HEK293T (cell line): ENCODE measurements at regions of chr10 and their contacts with region 1.

Region 1: GRCh38 chr10:95693668-95694534 is at the start of gene TCTN3:
- DNase-seq: peak; percentile 100

Region 2: GRCh38 chr10:95183271-95184230 is 510.4 kb before region 1 on chr10:
- CTCF ChIA-PET with region 1: no interaction called
- POLR2A ChIA-PET with region 1: no interaction called
- DNase-seq: peak; percentile 95

Region 3: DNA sequence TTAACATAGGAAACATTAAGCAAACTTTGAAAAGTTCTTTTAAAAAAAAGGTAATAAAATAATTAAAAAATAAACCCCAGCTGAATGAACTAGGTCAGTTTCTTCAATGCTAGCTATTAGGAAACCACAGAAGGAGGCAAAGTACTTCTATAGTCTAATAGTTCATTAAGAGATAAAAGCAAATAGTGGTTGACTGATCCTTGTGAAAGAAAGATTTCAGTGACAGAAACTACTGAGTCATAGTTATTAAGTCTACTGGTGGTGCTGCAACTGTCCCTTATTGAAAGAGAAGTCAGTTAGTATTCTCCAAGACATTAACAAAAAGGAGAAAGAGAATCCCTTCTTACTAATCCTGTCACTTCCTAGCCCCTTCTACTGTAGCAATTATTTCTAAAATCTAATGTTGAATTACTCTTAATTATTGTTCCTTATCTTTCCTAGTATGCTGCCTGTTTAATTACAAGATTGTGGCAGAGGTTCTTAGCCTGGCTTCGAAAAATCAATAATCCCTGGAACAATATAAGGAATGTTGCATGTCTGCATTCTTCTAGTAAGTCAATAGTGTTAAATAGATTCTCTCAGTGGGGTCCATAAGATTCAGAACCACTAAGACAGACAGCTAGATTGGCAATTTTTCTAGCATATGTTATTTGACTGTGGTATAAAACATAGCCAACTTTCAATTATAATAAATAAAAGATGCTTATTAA is 18.3 kb before region 1 on chr10:
- CTCF ChIA-PET with region 1: interaction called, 10 read pairs
- POLR2A ChIA-PET with region 1: interaction called, 5 read pairs
- DNase-seq: no peak

Region 4: GRCh38 chr10:95841661-95842498 is 148.0 kb after region 1 on chr10:
- CTCF ChIA-PET with region 1: interaction called, 82 read pairs
- POLR2A ChIA-PET with region 1: interaction called, 14 read pairs
- DNase-seq: peak; percentile 54

Region 5: DNA sequence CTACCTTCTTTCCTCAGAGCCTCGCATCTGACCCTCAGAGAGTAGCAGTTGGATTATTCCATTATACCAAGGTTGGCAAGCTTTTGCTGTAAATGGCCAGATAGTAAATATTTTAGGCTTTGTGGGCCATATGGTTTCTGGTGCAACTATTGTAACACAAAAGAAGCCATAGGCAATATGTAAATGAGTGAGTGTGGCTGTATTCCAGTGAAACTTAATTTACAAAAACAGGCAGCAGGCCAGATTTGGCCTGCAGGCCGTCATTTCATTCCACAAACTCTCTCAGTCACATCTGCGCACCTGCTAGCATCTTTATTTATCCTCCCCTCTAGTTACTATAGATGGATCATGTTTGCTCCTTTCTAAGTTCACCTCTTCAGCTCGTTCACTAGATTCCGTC is 442.9 kb after region 1 on chr10:
- CTCF ChIA-PET with region 1: no interaction called
- POLR2A ChIA-PET with region 1: no interaction called
- DNase-seq: no peak